HEK293 (cell line): ENCODE measurements at regions of chr1 and their contacts with region 1.

Region 1: DNA sequence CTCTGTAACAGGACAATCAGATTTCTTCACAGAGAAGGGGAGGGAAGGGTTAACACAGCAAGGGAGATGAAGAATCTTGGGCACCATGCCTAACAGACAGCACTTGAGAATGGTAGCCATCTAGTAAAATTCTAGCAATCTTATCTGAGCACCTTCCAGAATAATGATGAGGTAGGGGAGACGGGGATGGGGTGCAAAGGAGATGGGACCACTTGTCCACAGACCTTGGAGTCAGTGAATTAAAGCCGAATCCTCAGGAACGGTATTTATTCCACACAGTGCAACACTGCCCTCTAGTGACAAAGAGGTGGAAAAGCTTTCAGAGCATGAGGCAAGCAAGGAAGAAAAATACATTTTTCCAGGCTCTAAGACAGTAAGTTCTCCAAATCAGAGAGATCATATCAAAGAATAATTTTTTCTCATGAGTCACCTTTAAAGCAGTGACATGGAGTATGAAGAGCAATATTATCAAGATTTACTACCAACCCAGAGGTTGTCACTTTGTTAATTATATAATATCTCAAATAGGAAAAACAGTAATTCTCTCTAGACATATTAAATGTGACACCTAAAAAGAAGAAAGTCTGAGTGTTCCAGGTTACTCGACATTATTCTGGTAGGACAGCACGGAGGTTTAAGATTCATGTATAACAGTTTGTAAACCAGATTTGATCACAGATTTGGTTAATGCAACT is 43.3 kb upstream of the LPAR3 start:
- H3K4me3 ChIP-seq: no peak overlapping the region
- H3K27ac ChIP-seq: no peak overlapping the region
- H3K4me1 ChIP-seq: no peaks in the 10 kb centered on the region
- CTCF ChIP-seq: peak; percentile 88

Region 2: GRCh38 chr1:84758968-84759491 is 177.2 kb before region 1 on chr1:
- CTCF ChIA-PET with region 1: interaction called, 19 read pairs
- POLR2A ChIA-PET with region 1: no interaction called
- H3K4me3 ChIP-seq: no peak overlapping the region
- H3K27ac ChIP-seq: no peak overlapping the region
- H3K4me1 ChIP-seq: no peaks in the 10 kb centered on the region
- CTCF ChIP-seq: no peak

Region 3: DNA sequence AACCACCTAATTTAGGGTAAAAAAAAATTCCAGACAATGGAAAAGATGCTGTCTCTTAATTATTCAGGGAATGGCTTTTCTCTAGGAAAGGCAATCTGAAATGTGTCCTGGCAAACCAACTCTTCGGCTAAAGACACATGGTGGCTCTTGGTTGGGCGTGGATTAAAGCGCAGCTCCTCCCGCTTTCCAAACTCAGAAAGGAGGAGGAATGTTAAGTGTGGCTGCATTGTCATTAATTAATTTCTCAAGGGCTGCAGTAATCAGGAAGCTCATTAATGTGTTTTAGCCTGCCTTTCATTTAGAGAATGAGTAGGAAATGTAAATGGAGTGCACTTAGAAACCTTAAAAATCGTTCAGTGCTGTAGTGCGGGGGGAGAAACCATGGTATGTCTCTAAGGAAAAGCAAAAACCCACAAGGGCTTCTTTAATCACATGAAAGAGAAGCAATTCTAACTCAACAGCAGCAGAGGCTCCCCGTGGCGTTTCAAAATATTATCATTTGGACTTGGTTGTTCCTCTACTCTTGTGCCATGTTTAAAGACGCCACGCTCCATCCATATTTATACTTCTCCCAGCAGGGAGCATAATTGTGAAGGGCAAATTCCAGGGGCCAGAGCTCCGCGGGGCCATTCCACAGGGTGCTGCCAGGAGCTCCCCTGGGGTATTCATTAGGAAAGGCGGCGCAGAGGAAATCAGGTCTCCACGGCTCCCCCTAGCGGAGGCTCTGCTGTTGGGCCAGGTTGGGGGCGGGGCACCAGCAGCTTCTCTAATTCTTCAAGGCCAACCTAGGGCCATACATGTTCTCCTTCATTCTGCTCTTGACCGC is 154.1 kb before region 1 on chr1:
- CTCF ChIA-PET with region 1: interaction called, 16 read pairs
- POLR2A ChIA-PET with region 1: no interaction called
- H3K4me3 ChIP-seq: no peak overlapping the region
- H3K27ac ChIP-seq: no peak overlapping the region
- H3K4me1 ChIP-seq: no peaks in the 10 kb centered on the region
- CTCF ChIP-seq: peak; percentile 73